ENCODE measurements at regions of chr3 and their contacts with region 1.

Region 1: DNA sequence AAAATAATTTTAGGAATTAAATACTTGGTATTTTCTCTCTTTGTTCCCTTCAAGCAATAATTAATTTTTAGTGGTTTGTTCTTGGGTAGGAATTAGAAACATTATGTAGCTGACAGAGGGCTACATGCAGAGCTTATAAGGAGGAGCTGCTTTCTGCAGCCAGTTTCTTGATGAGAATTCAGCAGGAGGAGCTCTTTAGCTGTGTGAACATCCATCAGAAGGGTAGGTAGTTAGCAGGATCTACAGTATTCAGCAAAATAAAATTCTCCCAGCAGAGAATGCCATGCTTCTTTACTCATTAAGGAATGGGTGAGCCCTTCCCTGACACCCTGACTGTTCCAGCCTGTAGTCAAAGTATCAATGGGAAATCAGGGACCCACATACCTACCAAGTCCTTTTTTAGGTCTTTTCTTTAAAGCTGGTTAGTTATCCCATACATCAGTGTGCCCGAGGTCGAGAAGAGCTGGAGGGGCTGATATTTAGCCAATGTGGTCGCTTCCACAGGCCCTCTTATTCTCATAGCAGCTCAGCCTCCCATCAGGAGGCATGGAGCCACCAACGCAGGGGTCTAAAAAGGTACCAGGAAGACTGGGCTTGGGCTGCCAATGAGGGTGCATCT is 54.0 kb downstream of the KCNAB1 start:
- DNase-seq: peak; percentile 7 to 18
- H3K4me3 ChIP-seq: no peak overlapping the region
- H3K27ac ChIP-seq: no peak overlapping the region
- H3K4me1 ChIP-seq: peaks cover 0 to 14% of the 10 kb centered on the region in 2 donors
- H3K27me3 ChIP-seq: no peaks in the 10 kb centered on the region
- CTCF ChIP-seq: peak in 5 of 6 experiments; percentile 21 to 70 (median 53)
- POLR2A ChIP-seq: no peak

Region 2: DNA sequence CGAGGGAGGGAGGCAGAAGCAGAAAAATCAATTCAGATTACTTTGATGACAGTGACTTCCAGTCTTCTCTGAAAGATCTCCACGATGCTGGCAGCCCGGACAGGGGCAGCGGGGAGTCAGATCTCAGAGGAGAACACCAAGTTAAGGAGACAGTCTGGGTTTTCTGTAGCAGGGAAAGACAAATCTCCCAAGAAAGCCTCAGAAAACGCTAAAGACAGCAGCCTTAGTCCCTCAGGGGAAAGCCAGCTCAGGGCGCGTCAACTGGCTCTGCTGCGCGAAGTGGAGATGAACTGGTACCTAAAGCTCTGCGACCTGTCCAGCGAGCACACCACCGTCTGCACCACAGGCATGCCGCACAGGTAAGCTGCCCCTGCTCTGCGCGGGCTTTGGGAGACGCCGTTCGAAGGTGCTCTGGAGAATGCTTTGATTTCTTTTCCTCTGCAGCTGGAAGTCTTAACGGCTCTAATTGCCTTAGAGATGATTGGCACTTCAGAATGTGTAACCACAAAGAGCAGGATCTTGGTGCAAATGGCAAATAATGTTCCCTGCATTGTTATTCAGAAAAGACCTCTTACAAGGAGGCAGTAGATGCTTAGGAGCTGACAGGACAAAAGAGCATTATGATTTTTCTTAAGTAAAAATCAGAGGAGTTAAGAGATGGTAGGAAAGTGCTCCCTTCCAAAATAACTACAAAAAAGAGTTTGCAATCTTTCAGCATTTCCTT is 53.6 kb before region 1 on chr3 and contains the start of gene KCNAB1:
- intact Hi-C with region 1: no loop called
- DNase-seq: peak in 1 of 2 donors; percentile 3
- H3K4me3 ChIP-seq: no peak within 1 kb of the TSS
- H3K27ac ChIP-seq: no peak within 1 kb of the TSS
- H3K4me1 ChIP-seq: no peaks in the 10 kb centered on the region
- H3K27me3 ChIP-seq: no peaks in the 10 kb centered on the region
- CTCF ChIP-seq: no peak
- POLR2A ChIP-seq: no peak
- total RNA-seq, gene KCNAB1: 19.3 to 26.1 (median 22.9) TPM

Region 3: DNA sequence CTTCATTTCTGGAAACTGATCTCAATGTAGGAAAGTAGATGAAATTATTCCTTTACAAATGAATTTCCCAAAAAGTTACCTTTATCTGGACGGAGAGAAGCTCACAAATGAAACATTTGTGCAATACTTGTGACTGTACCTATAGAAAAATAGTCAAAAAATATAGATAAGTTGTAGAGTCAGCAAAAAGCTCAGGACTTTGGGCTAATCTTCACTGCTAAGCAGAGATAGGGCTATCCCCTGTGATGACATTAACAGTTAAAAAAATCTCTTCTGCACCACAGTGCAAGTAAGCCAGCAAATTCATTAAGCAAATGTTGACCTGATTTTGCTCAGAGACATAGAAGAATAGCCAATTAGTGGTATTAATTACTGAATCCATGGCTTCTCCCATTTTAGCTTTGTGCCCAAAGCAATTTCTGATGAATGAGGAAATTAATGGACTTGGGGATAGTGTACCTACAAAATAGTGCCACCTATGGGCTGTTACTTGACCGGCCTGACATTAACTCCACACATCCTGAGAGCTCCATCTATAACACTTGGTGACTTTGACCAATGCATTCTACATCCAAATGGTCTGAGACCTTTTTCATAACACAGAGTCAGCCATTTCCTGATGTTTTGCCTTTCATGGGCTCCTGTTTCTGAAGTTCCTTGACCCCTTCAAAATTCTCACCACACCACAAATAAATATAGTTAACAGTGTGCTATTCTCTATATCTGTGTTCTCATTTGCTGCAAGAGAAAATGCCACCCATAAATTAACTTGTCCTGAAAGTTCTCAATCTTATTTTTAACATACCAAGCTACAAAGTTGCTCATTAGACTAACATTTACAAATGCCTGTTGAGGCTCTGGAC is 275.6 kb after region 1 on chr3:
- intact Hi-C with region 1: loop called (anchors 10 kb)
- DNase-seq: peak; percentile 41 to 44
- H3K4me3 ChIP-seq: no peak overlapping the region
- H3K27ac ChIP-seq: no peak overlapping the region
- H3K4me1 ChIP-seq: no peaks in the 10 kb centered on the region
- H3K27me3 ChIP-seq: no peaks in the 10 kb centered on the region
- CTCF ChIP-seq: peak in 4 of 6 experiments; percentile 54 to 70 (median 64)
- POLR2A ChIP-seq: no peak

Region 4: GRCh38 chr3:156509189-156510174 is 335.1 kb after region 1 on chr3:
- intact Hi-C with region 1: loop called (anchors 10 kb)
- DNase-seq: no peak
- H3K4me3 ChIP-seq: no peak overlapping the region
- H3K27ac ChIP-seq: no peak overlapping the region
- H3K4me1 ChIP-seq: peaks cover 0 to 9% of the 10 kb centered on the region in 2 donors
- H3K27me3 ChIP-seq: no peaks in the 10 kb centered on the region
- CTCF ChIP-seq: peak in 5 of 6 experiments; percentile 45 to 75 (median 59)
- POLR2A ChIP-seq: no peak